GM10248 (cell line): ENCODE measurements at regions of chr15 and their contacts with region 1.

Region 1: DNA sequence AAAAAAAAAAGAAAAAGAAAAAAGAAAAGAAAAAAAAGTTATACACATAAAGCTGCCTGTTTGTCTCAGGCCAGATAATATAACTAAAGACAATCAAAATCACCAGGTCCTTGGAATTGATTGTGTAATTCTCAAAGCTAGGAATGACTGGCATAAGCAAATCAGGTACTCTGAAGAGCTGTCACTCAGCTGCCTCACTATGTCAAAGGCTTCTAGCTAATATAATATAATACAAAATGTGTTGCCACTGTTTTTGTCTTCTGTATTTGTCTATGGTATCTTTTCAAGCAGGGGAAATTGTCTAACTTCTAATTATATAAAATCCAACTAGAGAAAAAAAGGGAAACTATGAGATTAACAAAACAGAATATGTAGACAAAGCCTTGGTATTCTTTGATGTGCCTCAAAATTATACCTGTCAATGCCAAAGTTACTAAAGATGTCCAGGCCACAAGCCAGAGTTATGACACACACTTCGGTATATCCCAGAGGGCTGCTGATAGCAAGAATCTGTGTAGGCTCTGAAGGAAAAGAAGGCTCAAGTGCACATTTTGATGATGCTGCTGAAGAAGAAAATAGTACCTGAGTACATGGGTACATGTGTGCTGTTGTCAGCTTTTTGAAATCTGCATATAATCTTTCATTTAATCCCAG is 37.0 kb upstream of the NR2E3 start:
- DNase-seq: no peak
- CTCF ChIP-seq: no peak

Region 2: DNA sequence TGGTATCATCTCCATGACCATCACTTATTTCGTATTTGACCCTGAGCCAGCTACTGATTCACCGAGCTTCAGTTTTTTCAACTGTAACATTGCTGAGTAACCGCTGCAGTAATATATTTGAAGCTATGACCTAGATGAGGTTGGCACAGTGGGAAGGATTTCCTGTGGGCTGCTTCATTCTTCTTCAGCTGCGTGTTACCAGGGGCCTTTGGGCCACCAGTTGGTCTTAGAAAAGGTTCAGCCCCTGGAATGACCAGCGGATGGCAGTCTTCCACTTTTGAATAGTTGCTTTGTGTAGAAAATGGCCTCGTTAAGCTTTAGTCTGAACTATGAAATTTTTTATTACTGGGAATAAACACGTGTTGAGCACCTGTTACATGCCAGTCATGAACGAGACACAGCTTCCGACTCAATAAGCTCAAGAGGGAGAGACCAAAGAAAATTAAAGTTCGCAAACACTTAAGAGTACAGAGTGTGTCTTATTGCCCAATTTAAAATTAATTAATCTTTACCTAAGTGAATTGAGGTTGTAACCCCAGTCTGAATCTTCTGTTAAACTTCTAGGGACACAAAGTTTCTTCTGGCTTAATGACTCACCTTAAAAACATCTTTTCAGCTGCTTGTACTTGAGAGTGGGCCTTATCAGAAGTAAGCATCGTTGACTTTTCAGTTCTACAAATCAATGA is 20.6 kb before region 1 on chr15:
- CTCF ChIA-PET with region 1: interaction called, 16 read pairs
- POLR2A ChIA-PET with region 1: no interaction called
- DNase-seq: peak; percentile 44
- CTCF ChIP-seq: peak; percentile 44